IMR-90 (cell line): ENCODE measurements at regions of chr20 and their contacts with region 1.

Region 1: DNA sequence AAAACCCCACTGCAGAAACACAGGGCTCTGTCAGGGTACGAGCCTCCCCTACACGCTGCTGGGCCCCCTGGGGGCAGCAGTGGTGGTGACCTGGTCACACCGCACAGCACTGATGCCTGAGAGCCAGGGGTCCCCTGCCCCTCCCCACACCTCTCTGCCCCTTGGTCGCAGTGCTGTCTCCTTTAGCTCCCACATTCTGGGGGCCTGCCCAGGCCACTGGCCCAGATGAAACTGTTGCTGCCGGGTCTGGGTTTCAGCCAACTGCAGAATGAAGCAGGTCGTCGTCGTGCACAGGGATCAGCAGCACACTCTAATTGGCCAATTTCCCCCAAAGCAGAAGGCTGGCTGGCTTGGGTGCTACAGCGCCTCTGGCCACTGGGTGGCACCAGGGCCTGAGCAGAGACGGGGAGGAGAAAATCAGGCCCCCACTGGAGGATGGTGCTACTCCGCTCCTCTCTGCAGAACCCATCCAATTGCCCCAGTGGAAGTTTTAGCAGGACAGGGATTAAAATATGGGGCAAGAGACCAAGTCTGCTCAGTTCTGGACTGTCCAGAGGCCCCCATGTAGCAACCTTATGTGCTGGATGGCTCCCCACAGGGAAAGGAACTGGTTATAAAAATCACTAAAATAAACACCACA is 26.1 kb downstream of the DIDO1 start:
- DNase-seq: peak; percentile 64
- ATAC-seq: peak; percentile 90
- H3K4me3 ChIP-seq: no peak overlapping the region
- H3K27ac ChIP-seq: no peak overlapping the region
- H3K4me1 ChIP-seq: peaks cover 26% of the 10 kb centered on the region
- H3K27me3 ChIP-seq: no peaks in the 10 kb centered on the region
- CTCF ChIP-seq: peak; percentile 89
- POLR2A ChIP-seq: 0 out of 2 replicates have a peak, but pooled peaks have one; percentile 22
- RAD21 ChIP-seq: peak; percentile 83

Region 2: GRCh38 chr20:62881678-62882310 is 18.4 kb before region 1 on chr20:
- CTCF ChIA-PET with region 1: no interaction called
- POLR2A ChIA-PET with region 1: no interaction called
- dilution Hi-C with region 1: no loop called
- in situ Hi-C with region 1: no loop called
- intact Hi-C with region 1: no loop called
- DNase-seq: no peak
- ATAC-seq: no peak
- H3K4me3 ChIP-seq: no peak overlapping the region
- H3K27ac ChIP-seq: no peak overlapping the region
- H3K4me1 ChIP-seq: peaks cover 7% of the 10 kb centered on the region
- H3K27me3 ChIP-seq: no peaks in the 10 kb centered on the region
- CTCF ChIP-seq: no peak
- POLR2A ChIP-seq: no peak
- RAD21 ChIP-seq: no peak

Region 3: GRCh38 chr20:62925716-62926238 is 25.6 kb after region 1 on chr20:
- CTCF ChIA-PET with region 1: no interaction called
- POLR2A ChIA-PET with region 1: no interaction called
- dilution Hi-C with region 1: no loop called
- in situ Hi-C with region 1: no loop called
- intact Hi-C with region 1: loop called (anchors 2 kb)
- DNase-seq: no peak
- ATAC-seq: peak; percentile 7
- H3K4me3 ChIP-seq: peak overlapping the region; percentile 99
- H3K27ac ChIP-seq: peak overlapping the region; percentile 85
- H3K4me1 ChIP-seq: peaks cover 21% of the 10 kb centered on the region
- H3K27me3 ChIP-seq: no peaks in the 10 kb centered on the region
- CTCF ChIP-seq: no peak
- POLR2A ChIP-seq: no peak
- RAD21 ChIP-seq: no peak

Region 4: DNA sequence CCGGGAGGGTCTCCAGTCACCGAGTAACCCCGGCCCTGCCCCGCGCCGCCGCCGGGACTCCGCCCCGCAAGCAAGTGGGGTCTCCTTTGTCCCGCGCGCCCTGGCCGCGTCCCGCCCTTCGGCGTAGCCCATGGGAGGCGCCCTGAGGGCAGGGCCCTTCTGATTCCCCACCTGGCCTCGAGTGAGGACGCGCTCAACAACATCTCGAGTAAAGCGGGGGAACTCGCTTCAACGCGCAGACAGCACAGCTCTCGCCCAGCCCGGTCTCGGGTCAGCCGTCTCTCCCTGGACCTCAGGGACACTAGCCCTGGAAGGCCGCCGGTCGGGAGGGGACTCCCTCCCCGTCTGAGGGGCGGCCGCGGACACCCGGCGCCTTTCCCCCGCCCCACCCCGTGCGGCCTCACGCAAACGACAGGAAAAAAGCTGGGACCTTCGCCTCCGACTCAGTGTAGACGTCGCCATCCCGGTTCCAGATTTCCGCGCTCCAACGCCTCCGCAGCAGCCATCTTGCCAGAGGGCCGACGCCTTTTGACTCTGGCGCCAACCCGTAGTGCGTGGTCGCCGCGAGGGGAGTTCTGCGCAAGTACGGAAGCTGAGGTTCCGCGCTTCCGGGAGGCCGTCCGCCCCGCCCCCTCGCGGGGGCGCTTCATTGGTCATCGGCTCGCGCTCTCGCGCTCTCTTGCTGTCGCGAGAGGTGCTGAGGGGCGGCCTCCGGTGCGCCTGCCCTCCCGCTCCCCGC is 37.4 kb after region 1 on chr20:
- CTCF ChIA-PET with region 1: interaction called, 3 read pairs
- POLR2A ChIA-PET with region 1: no interaction called
- dilution Hi-C with region 1: no loop called
- in situ Hi-C with region 1: no loop called
- intact Hi-C with region 1: loop called (anchors 2 kb)
- DNase-seq: peak; percentile 96
- ATAC-seq: peak; percentile 90
- H3K4me3 ChIP-seq: peak overlapping the region; percentile 96
- H3K27ac ChIP-seq: peak overlapping the region; percentile 84
- H3K4me1 ChIP-seq: peaks cover 13% of the 10 kb centered on the region
- H3K27me3 ChIP-seq: no peaks in the 10 kb centered on the region
- CTCF ChIP-seq: no peak
- POLR2A ChIP-seq: peak; percentile 70
- RAD21 ChIP-seq: no peak

Region 5: GRCh38 chr20:62972270-62973032 is 72.3 kb after region 1 on chr20:
- CTCF ChIA-PET with region 1: no interaction called
- POLR2A ChIA-PET with region 1: no interaction called
- dilution Hi-C with region 1: no loop called
- in situ Hi-C with region 1: no loop called
- intact Hi-C with region 1: loop called (anchors 1 kb)
- DNase-seq: peak; percentile 69
- ATAC-seq: peak; percentile 99
- H3K4me3 ChIP-seq: peak overlapping the region; percentile 20; the same call in 1 of the 2 replicates
- H3K27ac ChIP-seq: no peak overlapping the region
- H3K4me1 ChIP-seq: no peaks in the 10 kb centered on the region
- H3K27me3 ChIP-seq: peaks cover 68% of the 10 kb centered on the region
- CTCF ChIP-seq: peak; percentile 94
- POLR2A ChIP-seq: 0 out of 2 replicates have a peak, but pooled peaks have one; percentile 30
- RAD21 ChIP-seq: peak; percentile 94